ENCODE measurements at regions of chr5 and their contacts with region 1.

Region 1: GRCh38 chr5:157718519-157718918 is 12.7 kb upstream of the THG1L start:
- DNase-seq: peak; percentile 78
- H3K4me3 ChIP-seq: no peak overlapping the region
- H3K27ac ChIP-seq: no peak overlapping the region
- H3K4me1 ChIP-seq: no peaks in the 10 kb centered on the region
- H3K27me3 ChIP-seq: no peaks in the 10 kb centered on the region
- CTCF ChIP-seq: peak; percentile 46 to 56
- POLR2A ChIP-seq: no peak

Region 2: GRCh38 chr5:157328277-157328912 is 390.1 kb before region 1 on chr5:
- CTCF ChIA-PET with region 1: interaction called, 69 read pairs
- POLR2A ChIA-PET with region 1: no interaction called
- dilution Hi-C with region 1: no loop called
- intact Hi-C with region 1: loop called (anchors 1 kb)
- DNase-seq: peak; percentile 71
- H3K4me3 ChIP-seq: no peak overlapping the region
- H3K27ac ChIP-seq: no peak overlapping the region
- H3K4me1 ChIP-seq: no peaks in the 10 kb centered on the region
- H3K27me3 ChIP-seq: no peaks in the 10 kb centered on the region
- CTCF ChIP-seq: peak; percentile 91 to 93
- POLR2A ChIP-seq: no peak

Region 3: DNA sequence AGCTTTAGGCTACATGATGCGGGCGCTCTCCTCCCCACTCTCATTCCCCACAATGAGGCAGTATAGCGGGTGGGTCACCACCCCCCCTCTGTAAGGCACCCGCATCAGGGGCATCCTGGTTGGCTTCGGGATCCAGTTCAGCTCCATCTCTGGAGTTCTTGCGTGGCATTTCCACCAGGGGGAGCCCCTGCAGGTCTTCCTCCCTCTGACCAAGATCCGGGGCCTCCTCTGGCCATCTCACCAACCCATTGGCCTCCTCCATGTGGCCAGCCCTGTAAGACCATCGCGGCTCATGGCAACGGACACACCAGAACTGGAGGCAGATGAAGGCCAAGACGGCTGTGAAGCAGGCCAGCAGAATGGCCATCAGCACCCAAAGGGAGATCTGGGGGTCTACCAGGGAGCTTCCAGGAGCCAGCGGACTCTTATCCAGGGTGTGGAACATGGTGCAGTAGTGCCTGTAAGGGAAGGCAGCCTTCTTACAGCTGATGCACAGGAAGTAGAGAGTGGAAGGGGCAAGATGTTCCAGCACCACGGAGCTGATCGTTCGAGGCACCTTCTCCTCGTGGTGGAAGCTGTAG is 375.6 kb before region 1 on chr5:
- CTCF ChIA-PET with region 1: interaction called, 49 read pairs
- POLR2A ChIA-PET with region 1: no interaction called
- dilution Hi-C with region 1: no loop called
- intact Hi-C with region 1: loop called (anchors 1 kb)
- DNase-seq: peak; percentile 28
- H3K4me3 ChIP-seq: no peak overlapping the region
- H3K27ac ChIP-seq: no peak overlapping the region
- H3K4me1 ChIP-seq: no peaks in the 10 kb centered on the region
- H3K27me3 ChIP-seq: peaks cover 0 to 3% of the 10 kb centered on the region in 2 experiments
- CTCF ChIP-seq: peak; percentile 65
- POLR2A ChIP-seq: no peak

Region 4: GRCh38 chr5:157431544-157432200 is 286.8 kb before region 1 on chr5:
- CTCF ChIA-PET with region 1: interaction called, 69 read pairs
- POLR2A ChIA-PET with region 1: no interaction called
- dilution Hi-C with region 1: no loop called
- intact Hi-C with region 1: loop called (anchors 1 kb)
- DNase-seq: peak; percentile 64
- H3K4me3 ChIP-seq: no peak overlapping the region
- H3K27ac ChIP-seq: no peak overlapping the region
- H3K4me1 ChIP-seq: no peaks in the 10 kb centered on the region
- H3K27me3 ChIP-seq: no peaks in the 10 kb centered on the region
- CTCF ChIP-seq: peak; percentile 16 to 20
- POLR2A ChIP-seq: no peak

Region 5: GRCh38 chr5:157575381-157576020 is 143.0 kb before region 1 on chr5 and contains the start of gene ADAM19:
- CTCF ChIA-PET with region 1: no interaction called
- POLR2A ChIA-PET with region 1: no interaction called
- dilution Hi-C with region 1: no loop called
- intact Hi-C with region 1: loop called (anchors 5 kb)
- DNase-seq: peak; percentile 68
- H3K4me3 ChIP-seq: peak within 1 kb of the TSS; percentile 57 to 69 (median 63)
- H3K27ac ChIP-seq: peak within 1 kb of the TSS; percentile 25
- H3K4me1 ChIP-seq: peaks cover 10% of the 10 kb centered on the region
- H3K27me3 ChIP-seq: peaks cover 7% of the 10 kb centered on the region in 2 experiments
- CTCF ChIP-seq: no peak
- POLR2A ChIP-seq: peak; percentile 56
- total RNA-seq, gene ADAM19: 22.6 and 23.8 TPM in 2 replicates

Region 6: DNA sequence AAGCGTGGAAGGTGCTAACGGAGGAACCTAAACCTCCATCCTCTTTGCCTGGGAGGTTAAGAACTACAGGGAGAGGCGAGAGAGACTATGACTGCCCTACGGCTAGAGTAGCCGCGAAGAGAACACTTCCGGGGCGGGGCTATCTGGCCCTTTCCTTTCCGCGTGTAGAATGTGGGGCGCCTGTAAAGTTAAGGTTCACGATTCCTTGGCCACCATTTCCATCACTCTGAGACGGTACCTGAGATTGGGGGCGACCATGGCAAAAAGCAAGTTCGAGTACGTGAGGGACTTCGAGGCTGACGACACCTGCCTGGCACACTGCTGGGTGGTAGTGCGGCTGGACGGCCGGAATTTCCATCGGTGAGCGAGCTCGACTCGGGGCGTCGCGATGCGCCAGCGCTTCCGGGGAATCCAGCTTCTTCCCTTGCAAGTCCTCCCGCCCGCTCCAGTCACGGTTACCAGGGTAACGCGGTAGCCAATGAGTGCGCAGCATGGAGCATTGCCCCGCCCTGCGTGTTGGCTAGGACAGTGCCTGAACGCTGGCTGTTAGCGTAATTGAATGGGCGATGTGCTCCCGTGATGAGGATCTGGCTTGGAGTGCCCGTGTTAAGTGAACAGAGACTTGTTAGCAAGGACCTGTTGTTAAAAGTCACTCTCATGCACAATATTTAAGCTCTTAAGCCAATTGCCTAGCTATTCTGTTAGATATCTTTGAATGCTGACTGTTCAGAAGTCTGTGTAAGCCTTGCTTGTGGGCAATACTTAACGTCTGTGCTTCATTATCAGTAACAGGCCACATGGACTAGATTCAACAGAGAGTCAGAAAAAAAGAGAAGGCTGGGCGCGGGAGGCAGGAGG is 13.0 kb after region 1 on chr5 and contains the start of gene THG1L:
- CTCF ChIA-PET with region 1: interaction called, 11 read pairs
- POLR2A ChIA-PET with region 1: interaction called, 3 read pairs
- dilution Hi-C with region 1: no loop called
- intact Hi-C with region 1: no loop called
- DNase-seq: peak; percentile 98
- H3K4me3 ChIP-seq: peak within 1 kb of the TSS in 2 of 3 experiments; percentile 65 to 79
- H3K27ac ChIP-seq: peak within 1 kb of the TSS; percentile 33
- H3K4me1 ChIP-seq: no peaks in the 10 kb centered on the region
- H3K27me3 ChIP-seq: no peaks in the 10 kb centered on the region
- CTCF ChIP-seq: no peak
- POLR2A ChIP-seq: peak; percentile 73
- total RNA-seq, gene THG1L: 3.7 and 7.6 TPM in 2 replicates

Measured in endothelial cell of umbilical vein (primary cell).